SK-N-SH (cell line): ENCODE measurements at regions of chr2 and their contacts with region 1.

Region 1: DNA sequence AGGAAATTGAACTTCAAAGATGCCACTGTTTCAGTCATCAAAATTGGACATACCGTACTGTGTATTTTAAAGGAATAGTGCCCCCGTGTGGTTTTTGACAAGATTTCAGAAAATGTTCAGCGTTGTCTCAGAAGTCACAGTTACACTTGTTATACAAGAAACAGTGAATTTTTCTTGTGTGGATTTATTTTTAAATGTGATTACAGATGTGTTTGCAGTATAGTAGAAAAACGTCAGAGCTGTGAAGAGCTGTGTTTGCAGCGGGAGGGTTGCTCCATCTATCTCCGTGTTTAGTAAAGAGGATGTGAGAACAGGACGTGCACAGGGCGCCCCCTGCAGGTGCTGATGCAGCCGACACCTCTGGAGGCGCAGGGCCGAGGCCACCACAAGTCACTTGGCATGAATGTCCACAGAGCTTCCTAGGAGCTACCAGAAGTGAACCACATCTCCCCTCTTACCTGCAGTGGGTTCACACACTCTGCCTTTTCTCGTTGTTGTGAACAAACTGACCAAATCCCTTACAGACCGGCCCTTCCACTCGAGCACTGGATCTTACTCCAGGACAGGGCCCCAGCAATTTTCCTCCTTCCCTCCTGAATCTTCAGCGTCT is 73.1 kb downstream of the CACNB4 start:
- DNase-seq: peak; percentile 72
- H3K4me3 ChIP-seq: peak overlapping the region; percentile 35 to 59
- H3K27ac ChIP-seq: no peak overlapping the region
- H3K4me1 ChIP-seq: no peaks in the 10 kb centered on the region
- H3K27me3 ChIP-seq: no peaks in the 10 kb centered on the region
- CTCF ChIP-seq: peak; percentile 100
- EP300 ChIP-seq: no peak
- RAD21 ChIP-seq: peak; percentile 59

Region 2: DNA sequence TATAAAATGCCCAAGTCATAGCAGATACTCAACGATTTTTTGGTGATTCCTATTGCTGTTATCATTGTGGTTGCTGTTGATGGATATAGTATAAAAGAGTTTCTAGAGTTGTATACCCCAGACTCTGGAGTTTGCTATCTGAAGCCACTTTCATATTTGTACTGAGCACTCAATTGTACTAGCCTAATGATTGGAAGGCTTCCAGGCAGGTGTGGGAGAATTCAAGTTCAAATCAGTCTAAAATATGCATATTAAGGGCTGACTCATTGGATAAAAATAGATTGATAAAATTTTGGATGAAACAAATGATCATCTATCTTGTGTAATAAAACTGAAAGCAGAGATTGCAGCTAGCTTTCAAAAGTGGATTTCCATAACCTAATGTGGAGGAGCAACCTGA is 414.4 kb before region 1 on chr2:
- CTCF ChIA-PET with region 1: interaction called, 10 read pairs
- POLR2A ChIA-PET with region 1: no interaction called
- DNase-seq: no peak
- H3K4me3 ChIP-seq: no peak overlapping the region
- H3K27ac ChIP-seq: no peak overlapping the region
- H3K4me1 ChIP-seq: no peaks in the 10 kb centered on the region
- H3K27me3 ChIP-seq: no peaks in the 10 kb centered on the region
- CTCF ChIP-seq: no peak
- EP300 ChIP-seq: no peak
- RAD21 ChIP-seq: no peak

Region 3: DNA sequence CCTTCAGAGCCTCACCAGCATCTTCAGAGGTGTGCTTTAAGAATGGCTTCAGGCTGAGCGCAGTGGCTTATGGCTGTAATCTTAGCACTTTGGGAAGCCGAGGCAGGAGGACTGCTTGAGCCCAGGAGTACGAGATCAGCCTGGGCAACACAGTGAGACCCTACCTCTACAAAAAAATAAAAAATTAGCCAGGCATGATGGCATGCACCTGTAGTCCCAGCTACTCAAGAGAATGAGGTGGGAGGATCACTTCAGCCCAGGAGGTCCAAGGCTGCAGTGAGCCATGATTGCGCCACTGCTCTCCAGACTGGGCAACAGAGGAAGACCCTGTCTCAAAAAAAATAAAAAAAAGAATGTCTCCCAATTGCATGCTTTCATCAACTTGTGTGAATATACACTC is 64.2 kb before region 1 on chr2:
- CTCF ChIA-PET with region 1: interaction called, 11 read pairs
- POLR2A ChIA-PET with region 1: no interaction called
- DNase-seq: no peak
- H3K4me3 ChIP-seq: no peak overlapping the region
- H3K27ac ChIP-seq: no peak overlapping the region
- H3K4me1 ChIP-seq: no peaks in the 10 kb centered on the region
- H3K27me3 ChIP-seq: no peaks in the 10 kb centered on the region
- CTCF ChIP-seq: no peak
- EP300 ChIP-seq: no peak
- RAD21 ChIP-seq: no peak

Region 4: GRCh38 chr2:151999053-151999452 is 26.7 kb before region 1 on chr2:
- CTCF ChIA-PET with region 1: interaction called, 29 read pairs
- POLR2A ChIA-PET with region 1: no interaction called
- DNase-seq: peak; percentile 72
- H3K4me3 ChIP-seq: peak overlapping the region in 1 of 2 experiments; percentile 38; a peak in 1 of 4 replicates
- H3K27ac ChIP-seq: no peak overlapping the region
- H3K4me1 ChIP-seq: no peaks in the 10 kb centered on the region
- H3K27me3 ChIP-seq: no peaks in the 10 kb centered on the region
- CTCF ChIP-seq: peak; percentile 85
- EP300 ChIP-seq: no peak
- RAD21 ChIP-seq: peak; percentile 64

Region 5: GRCh38 chr2:152036611-152037469 is 11.1 kb after region 1 on chr2:
- CTCF ChIA-PET with region 1: interaction called, 71 read pairs
- POLR2A ChIA-PET with region 1: interaction called, 3 read pairs
- DNase-seq: peak; percentile 66
- H3K4me3 ChIP-seq: no peak overlapping the region; a peak in 1 of 4 replicates
- H3K27ac ChIP-seq: no peak overlapping the region
- H3K4me1 ChIP-seq: no peaks in the 10 kb centered on the region; a peak in 1 of 4 replicates
- H3K27me3 ChIP-seq: no peaks in the 10 kb centered on the region
- CTCF ChIP-seq: peak; percentile 85
- EP300 ChIP-seq: no peak
- RAD21 ChIP-seq: peak; percentile 96

Region 6: GRCh38 chr2:152097801-152098495 is 72.2 kb after region 1 on chr2:
- CTCF ChIA-PET with region 1: interaction called, 10 read pairs
- POLR2A ChIA-PET with region 1: no interaction called
- DNase-seq: no peak
- H3K4me3 ChIP-seq: peak overlapping the region; percentile 49 to 61
- H3K27ac ChIP-seq: no peak overlapping the region
- H3K4me1 ChIP-seq: peaks cover 0 to 20% of the 10 kb centered on the region in 2 experiments; a peak in 2 of 4 replicates
- H3K27me3 ChIP-seq: peaks cover 34% of the 10 kb centered on the region
- CTCF ChIP-seq: no peak
- EP300 ChIP-seq: no peak
- RAD21 ChIP-seq: no peak

Region 7: GRCh38 chr2:152219077-152219828 is 193.5 kb after region 1 on chr2:
- CTCF ChIA-PET with region 1: no interaction called
- POLR2A ChIA-PET with region 1: no interaction called
- DNase-seq: no peak
- H3K4me3 ChIP-seq: no peak overlapping the region
- H3K27ac ChIP-seq: no peak overlapping the region
- H3K4me1 ChIP-seq: peaks cover 3 to 6% of the 10 kb centered on the region in 2 experiments; a peak in 3 of 4 replicates
- H3K27me3 ChIP-seq: no peaks in the 10 kb centered on the region
- CTCF ChIP-seq: no peak
- EP300 ChIP-seq: no peak
- RAD21 ChIP-seq: no peak